GM12878 (cell line): ENCODE measurements at regions of chr12 and their contacts with region 1.

Region 1: DNA sequence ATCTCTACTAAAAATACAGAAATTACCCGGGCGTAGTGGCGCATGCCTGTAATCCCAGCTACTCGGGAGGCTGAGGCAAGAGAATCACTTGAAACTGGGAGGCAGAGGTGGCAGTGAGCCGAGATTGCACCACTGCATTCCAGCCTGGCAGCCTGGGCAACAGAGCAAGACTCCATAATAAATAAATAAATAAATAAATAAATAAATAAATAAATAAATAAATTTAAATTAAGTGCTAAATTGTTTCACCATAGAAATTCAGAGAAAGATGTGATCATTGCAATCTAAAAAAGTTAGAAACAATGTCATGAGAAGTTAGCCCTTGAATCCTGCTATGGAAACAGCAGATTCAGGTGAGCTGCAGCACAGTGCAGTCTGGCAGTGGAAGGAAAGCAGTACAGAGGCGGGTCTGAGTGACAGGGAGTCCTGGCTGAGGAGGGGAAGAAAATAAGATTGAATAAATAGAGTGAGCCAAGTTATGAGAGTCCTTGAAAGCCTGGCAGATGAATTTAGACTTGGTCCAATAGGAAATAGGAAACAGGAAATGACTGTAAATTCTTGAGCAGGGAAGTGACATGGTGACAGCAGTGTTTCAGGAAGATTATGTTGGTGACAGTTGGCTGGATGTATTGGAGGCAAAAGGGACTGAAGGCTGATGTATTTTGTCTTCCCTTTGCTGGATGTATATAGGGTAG is 241.5 kb downstream of the GXYLT1 start:
- DNase-seq: no peak
- ATAC-seq: no peak
- H3K4me3 ChIP-seq: no peak overlapping the region
- H3K27ac ChIP-seq: no peak overlapping the region
- H3K4me1 ChIP-seq: no peaks in the 10 kb centered on the region
- H3K27me3 ChIP-seq: no peaks in the 10 kb centered on the region; a peak in 1 of 4 replicates
- CTCF ChIP-seq: no peak
- EP300 ChIP-seq: no peak
- POLR2A ChIP-seq: no peak
- RAD21 ChIP-seq: no peak

Region 2: DNA sequence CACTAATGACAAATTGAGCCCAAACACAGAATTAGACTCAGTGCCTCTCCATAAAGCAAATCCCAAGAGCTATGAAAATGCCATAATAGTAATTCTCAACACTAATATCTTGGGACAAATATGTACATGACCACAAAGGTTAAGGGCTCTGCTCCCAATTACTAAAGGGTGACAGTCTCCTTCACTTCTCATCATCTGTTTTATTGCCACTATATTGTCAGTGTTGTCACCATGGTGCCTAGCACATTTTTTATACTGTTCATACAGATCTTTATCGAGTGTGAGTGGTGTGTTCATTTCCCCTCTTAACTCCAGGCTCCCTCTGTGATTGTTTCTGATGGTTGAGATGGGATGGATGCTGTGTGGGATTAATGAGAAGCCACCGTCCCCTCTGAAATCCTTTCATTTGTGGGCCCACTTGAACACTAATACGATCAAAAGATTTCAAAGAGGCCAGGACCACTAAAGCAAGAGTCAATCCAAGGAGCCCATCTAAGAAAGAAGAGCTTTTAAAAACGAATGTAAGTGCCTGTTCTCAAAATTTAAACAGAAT is 36.2 kb before region 1 on chr12:
- CTCF ChIA-PET with region 1: no interaction called
- POLR2A ChIA-PET with region 1: no interaction called
- RAD21 ChIA-PET with region 1: no interaction called
- SMC1A ChIA-PET with region 1: no interaction called
- in situ Hi-C with region 1: no loop called
- intact Hi-C with region 1: loop called (anchors 1 kb)
- DNase-seq: no peak
- ATAC-seq: no peak
- H3K4me3 ChIP-seq: no peak overlapping the region
- H3K27ac ChIP-seq: no peak overlapping the region
- H3K4me1 ChIP-seq: no peaks in the 10 kb centered on the region
- H3K27me3 ChIP-seq: no peaks in the 10 kb centered on the region; a peak in 1 of 4 replicates
- CTCF ChIP-seq: no peak
- EP300 ChIP-seq: no peak
- POLR2A ChIP-seq: no peak
- RAD21 ChIP-seq: no peak